IMR-90 (cell line): ENCODE measurements at regions of chr6 and their contacts with region 1.

Region 1: GRCh38 chr6:74091136-74091793 is 395.3 kb downstream of the CD109 start:
- DNase-seq: peak; percentile 58
- ATAC-seq: peak; percentile 76
- H3K4me3 ChIP-seq: no peak overlapping the region
- H3K27ac ChIP-seq: no peak overlapping the region; the same call in 1 of the 2 replicates
- H3K4me1 ChIP-seq: peaks cover 4% of the 10 kb centered on the region
- H3K27me3 ChIP-seq: no peaks in the 10 kb centered on the region
- CTCF ChIP-seq: peak; percentile 62
- POLR2A ChIP-seq: no peak
- RAD21 ChIP-seq: peak; percentile 62

Region 2: GRCh38 chr6:73747289-73747688 is 344.0 kb before region 1 on chr6:
- CTCF ChIA-PET with region 1: no interaction called
- POLR2A ChIA-PET with region 1: no interaction called
- dilution Hi-C with region 1: no loop called
- in situ Hi-C with region 1: loop called (anchors 10 kb)
- intact Hi-C with region 1: no loop called
- DNase-seq: no peak
- ATAC-seq: no peak
- H3K4me3 ChIP-seq: no peak overlapping the region
- H3K27ac ChIP-seq: no peak overlapping the region
- H3K4me1 ChIP-seq: peaks cover 4% of the 10 kb centered on the region
- H3K27me3 ChIP-seq: no peaks in the 10 kb centered on the region
- CTCF ChIP-seq: no peak
- POLR2A ChIP-seq: no peak
- RAD21 ChIP-seq: no peak

Region 3: DNA sequence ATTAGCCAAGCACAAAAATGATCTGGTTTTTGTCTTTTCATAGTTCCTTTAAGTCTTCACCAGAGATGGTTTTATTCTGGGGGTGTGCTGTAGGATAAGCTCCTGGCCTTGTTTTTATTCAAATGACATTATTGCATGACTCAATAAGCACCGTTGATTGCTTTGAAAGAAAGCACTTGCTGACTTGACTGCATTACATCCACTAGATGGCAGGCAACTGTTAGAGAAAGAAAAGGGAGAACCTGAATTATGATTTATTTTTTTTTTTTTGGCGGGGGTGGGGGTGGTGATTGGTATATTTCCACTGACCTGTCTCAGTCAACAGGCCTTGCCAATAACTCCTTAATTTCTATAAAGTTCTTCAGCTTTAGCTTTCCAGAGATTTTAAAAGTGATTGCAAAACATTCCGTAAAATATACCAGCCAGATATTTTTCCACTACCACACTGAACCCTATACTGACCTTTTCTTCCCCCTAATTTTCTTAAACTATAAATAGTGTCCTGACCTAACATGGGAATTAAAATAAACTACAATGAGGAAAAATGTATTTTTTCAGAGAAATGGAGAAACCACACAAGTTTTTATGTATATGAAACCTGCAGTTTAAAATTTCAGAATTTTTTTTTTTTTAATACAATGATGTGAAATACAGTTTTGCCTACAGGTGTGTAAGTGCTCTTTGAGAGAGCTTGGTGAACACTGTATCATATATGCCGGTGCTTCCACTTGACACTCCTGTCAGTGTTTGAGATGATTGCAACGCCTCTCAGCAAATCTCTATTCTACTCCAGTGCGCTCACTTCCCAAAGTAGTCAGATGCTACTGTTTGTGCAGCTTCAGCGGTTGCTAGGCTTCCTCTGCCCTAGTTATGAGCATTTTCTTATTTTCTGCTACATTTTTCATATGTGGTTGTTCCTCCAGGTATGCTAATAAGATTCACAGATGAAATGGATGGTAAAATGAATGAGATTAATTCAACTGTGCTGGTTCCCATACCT is 121.0 kb before region 1 on chr6:
- CTCF ChIA-PET with region 1: interaction called, 7 read pairs
- POLR2A ChIA-PET with region 1: no interaction called
- dilution Hi-C with region 1: no loop called
- in situ Hi-C with region 1: no loop called
- intact Hi-C with region 1: loop called (anchors 1 kb)
- DNase-seq: peak; percentile 67
- ATAC-seq: peak; percentile 66
- H3K4me3 ChIP-seq: no peak overlapping the region
- H3K27ac ChIP-seq: no peak overlapping the region
- H3K4me1 ChIP-seq: peaks cover 2% of the 10 kb centered on the region; the same call in 1 of the 2 replicates
- H3K27me3 ChIP-seq: no peaks in the 10 kb centered on the region
- CTCF ChIP-seq: peak; percentile 75
- POLR2A ChIP-seq: no peak
- RAD21 ChIP-seq: peak; percentile 68

Region 4: DNA sequence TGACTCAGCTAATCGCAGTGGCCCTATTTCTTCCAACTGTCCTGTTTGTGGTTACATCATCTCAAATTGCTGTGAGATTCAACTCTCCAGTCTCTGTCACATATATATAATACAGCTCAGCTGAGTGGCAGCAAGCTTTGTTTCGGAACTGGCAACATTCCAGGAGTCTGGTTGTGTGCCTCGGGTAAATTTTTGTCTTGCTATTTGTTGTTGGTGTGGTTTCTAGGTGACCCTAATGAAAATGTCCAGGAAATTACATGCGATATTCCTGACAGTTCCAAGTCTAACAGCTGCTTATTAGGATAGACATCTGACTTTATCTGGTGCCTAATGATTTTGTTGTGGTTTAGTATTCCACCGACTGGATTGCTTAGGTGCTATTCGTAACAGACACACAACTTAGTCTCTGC is 186.5 kb after region 1 on chr6:
- CTCF ChIA-PET with region 1: no interaction called
- POLR2A ChIA-PET with region 1: interaction called, 3 read pairs
- dilution Hi-C with region 1: no loop called
- in situ Hi-C with region 1: no loop called
- intact Hi-C with region 1: loop called (anchors 5 kb)
- DNase-seq: peak; percentile 17
- ATAC-seq: peak; percentile 21
- H3K4me3 ChIP-seq: no peak overlapping the region
- H3K27ac ChIP-seq: peak overlapping the region; percentile 58; the same call in 1 of the 2 replicates
- H3K4me1 ChIP-seq: peaks cover 2% of the 10 kb centered on the region; the same call in 1 of the 2 replicates
- H3K27me3 ChIP-seq: no peaks in the 10 kb centered on the region
- CTCF ChIP-seq: no peak
- POLR2A ChIP-seq: no peak
- RAD21 ChIP-seq: no peak

Region 5: GRCh38 chr6:74574794-74575193 is 483.5 kb after region 1 on chr6:
- CTCF ChIA-PET with region 1: no interaction called
- POLR2A ChIA-PET with region 1: no interaction called
- dilution Hi-C with region 1: no loop called
- in situ Hi-C with region 1: no loop called
- intact Hi-C with region 1: loop called (anchors 10 kb)
- DNase-seq: peak; percentile 58
- ATAC-seq: peak; percentile 43; the same call in 1 of the 2 replicates
- H3K4me3 ChIP-seq: no peak overlapping the region
- H3K27ac ChIP-seq: no peak overlapping the region
- H3K4me1 ChIP-seq: peaks cover 10% of the 10 kb centered on the region
- H3K27me3 ChIP-seq: no peaks in the 10 kb centered on the region
- CTCF ChIP-seq: peak; percentile 56
- POLR2A ChIP-seq: no peak
- RAD21 ChIP-seq: peak; percentile 63

Region 6: DNA sequence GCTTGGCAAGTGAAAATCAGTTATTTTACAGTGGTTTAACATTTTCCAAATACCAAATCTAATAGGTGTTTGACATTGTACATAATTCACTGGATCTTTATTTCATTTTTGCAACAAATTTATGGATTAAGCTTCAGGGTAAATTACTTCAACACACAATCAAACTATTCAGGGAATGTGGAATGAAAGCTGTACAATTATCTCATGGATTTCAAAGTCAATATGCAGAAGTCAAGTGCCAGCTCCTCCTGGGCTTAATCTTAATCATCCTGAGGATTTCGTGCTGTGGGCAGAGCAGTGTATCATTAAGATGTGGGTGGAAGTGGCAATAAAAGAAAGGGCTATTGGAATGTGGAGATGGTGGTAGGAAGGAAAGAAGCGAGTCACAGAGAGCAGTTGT is 565.7 kb after region 1 on chr6:
- CTCF ChIA-PET with region 1: no interaction called
- POLR2A ChIA-PET with region 1: no interaction called
- dilution Hi-C with region 1: no loop called
- in situ Hi-C with region 1: no loop called
- intact Hi-C with region 1: no loop called
- DNase-seq: no peak
- ATAC-seq: no peak
- H3K4me3 ChIP-seq: no peak overlapping the region
- H3K27ac ChIP-seq: no peak overlapping the region
- H3K4me1 ChIP-seq: no peaks in the 10 kb centered on the region
- H3K27me3 ChIP-seq: no peaks in the 10 kb centered on the region
- CTCF ChIP-seq: no peak
- POLR2A ChIP-seq: no peak
- RAD21 ChIP-seq: no peak

Region 7: DNA sequence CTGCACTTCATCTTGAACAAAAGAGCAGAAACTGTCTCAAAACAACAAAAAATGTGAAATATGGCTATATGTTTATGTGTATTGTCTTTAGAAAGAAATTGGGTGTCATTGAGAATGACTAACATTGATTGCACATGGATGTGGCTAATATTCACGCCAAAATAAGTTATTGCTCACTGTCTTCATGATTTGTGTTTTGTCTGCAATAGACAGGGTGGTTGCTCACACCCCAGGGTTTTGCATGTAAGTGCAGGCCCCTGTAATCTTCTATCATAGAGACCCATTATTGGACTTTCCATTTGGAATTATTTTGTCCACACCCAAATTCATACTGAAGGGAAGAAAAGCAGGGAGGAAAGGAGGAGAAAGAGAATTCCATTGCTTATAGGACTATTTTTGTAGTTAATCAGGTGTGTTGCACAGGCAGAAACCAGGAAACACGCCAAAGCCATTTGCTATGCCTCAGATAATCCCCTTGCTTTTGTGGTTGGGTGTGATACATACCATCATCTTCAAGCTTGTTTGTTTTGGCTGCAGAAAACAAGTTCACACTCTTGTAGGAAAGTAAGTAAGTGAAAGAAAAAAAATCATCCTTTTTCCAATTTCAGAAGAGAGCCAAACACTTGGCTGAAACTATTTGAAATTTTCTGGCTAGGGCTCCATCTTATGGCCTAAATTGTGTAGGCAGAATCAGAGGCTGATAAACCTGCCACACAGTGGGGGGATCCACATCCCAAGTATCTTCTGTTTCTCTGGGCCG is 900.5 kb after region 1 on chr6:
- CTCF ChIA-PET with region 1: no interaction called
- POLR2A ChIA-PET with region 1: no interaction called
- dilution Hi-C with region 1: no loop called
- in situ Hi-C with region 1: no loop called
- intact Hi-C with region 1: loop called (anchors 1 kb)
- DNase-seq: peak; percentile 38
- ATAC-seq: peak; percentile 64
- H3K4me3 ChIP-seq: no peak overlapping the region
- H3K27ac ChIP-seq: no peak overlapping the region
- H3K4me1 ChIP-seq: no peaks in the 10 kb centered on the region
- H3K27me3 ChIP-seq: no peaks in the 10 kb centered on the region
- CTCF ChIP-seq: peak; percentile 54
- POLR2A ChIP-seq: no peak
- RAD21 ChIP-seq: peak; percentile 44